ENCODE measurements at regions of chr13 and their contacts with region 1.

Region 1: DNA sequence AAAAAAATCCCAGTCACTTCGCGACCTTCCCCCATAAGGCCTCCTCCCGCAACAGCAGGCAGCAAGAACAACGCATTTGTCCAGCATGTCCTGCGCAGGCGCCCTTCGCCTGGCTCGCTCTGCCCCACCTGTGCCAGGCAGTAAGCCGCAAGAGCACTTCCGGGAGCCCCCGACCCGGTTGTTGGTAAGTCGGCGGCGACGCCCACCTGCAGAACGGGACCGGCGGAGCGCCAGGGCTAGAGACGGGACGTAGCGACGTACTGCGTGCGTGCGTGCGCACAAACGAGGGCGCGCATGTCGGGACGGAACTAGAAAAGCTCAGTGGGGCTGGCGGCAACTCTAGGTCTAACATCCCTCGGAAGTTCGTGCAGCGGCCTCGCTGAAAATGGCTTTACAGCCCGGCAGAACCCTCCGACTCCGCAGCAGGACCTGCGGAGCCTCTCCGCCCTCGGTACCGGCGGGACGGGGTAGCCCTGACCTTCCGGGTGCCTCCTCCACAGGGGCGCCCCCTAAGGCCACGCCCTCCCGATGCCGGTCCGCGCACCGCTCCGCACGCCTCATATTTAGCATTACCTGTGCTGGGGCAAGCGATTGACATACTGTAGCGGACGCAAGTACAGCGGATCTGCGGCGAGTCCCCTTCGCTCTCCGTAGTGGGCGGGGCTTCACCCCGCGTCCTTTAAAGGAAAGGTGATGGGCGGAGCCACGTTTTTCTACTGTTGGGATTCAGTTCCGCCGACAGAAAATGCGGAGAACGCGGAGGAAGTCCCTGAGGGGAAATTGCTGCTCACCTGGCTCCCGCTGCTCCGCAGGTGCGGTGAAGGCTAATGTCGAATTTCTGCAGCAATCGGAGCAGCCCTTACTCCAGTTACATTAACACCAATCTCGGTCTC is at the start of gene MTIF3:
- DNase-seq: peak; percentile 99
- H3K4me3 ChIP-seq: peak within 1 kb of the TSS; percentile 78
- H3K27ac ChIP-seq: peak within 1 kb of the TSS; percentile 95
- H3K4me1 ChIP-seq: peaks cover 57% of the 10 kb centered on the region
- CTCF ChIP-seq: peak; percentile 23; the same call in 1 of the 2 replicates
- total RNA-seq, gene MTIF3: 37.9 and 56.3 TPM in 2 replicates

Region 2: GRCh38 chr13:27171827-27172494 is 278.2 kb before region 1 on chr13:
- CTCF ChIA-PET with region 1: no interaction called
- POLR2A ChIA-PET with region 1: no interaction called
- intact Hi-C with region 1: loop called (anchors 10 kb)
- DNase-seq: peak; percentile 93
- H3K4me3 ChIP-seq: peak overlapping the region; percentile 82
- H3K27ac ChIP-seq: peak overlapping the region; percentile 61
- H3K4me1 ChIP-seq: peaks cover 53% of the 10 kb centered on the region
- CTCF ChIP-seq: peak; percentile 32; the same call in 1 of the 2 replicates

Region 3: GRCh38 chr13:27259831-27260230 is 190.4 kb before region 1 on chr13:
- CTCF ChIA-PET with region 1: no interaction called
- POLR2A ChIA-PET with region 1: no interaction called
- intact Hi-C with region 1: loop called (anchors 2 kb)
- DNase-seq: peak; percentile 41
- H3K4me3 ChIP-seq: no peak overlapping the region
- H3K27ac ChIP-seq: peak overlapping the region; percentile 58
- H3K4me1 ChIP-seq: peaks cover 64% of the 10 kb centered on the region
- CTCF ChIP-seq: no peak

Region 4: DNA sequence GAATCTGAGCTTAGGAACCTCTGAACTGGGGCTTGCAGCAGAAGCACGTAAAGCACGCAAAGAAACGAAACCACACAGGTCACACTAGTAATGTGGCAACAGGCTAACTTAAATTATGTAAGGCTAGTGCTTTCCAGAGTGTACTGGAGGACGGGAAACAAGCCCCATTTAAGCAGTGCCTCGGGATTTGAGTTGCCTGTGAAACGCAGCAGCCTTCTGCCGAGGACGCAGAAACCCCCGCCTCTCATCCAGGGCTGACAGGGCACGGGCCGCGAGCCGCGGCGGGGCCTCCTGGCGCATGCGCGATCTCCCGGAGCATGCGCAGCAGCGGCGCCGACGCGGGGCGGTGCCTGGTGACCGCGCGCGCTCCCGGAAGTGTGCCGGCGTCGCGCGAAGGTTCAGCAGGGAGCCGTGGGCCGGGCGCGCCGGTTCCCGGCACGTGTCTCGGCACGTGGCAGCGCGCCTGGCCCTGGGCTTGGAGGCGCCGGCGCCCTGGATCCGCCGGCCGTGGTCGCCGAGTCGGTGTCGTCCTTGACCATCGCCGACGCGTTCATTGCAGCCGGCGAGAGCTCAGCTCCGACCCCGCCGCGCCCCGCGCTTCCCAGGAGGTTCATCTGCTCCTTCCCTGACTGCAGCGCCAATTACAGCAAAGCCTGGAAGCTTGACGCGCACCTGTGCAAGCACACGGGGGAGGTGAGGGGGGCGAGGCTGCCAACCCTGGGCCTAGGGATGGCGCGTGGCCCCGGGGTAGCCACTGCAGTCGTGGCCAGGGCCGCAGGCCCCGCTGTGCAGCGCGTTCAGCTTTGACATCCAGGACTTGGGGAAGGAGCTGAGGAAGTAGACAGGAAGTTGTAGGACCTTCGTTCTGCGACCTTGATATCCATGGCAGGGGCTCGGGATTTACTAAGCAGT is 25.7 kb before region 1 on chr13 and contains the start of gene GTF3A:
- CTCF ChIA-PET with region 1: interaction called, 6 read pairs
- POLR2A ChIA-PET with region 1: interaction called, 38 read pairs
- intact Hi-C with region 1: loop called (anchors 1 kb)
- DNase-seq: peak; percentile 91
- H3K4me3 ChIP-seq: peak within 1 kb of the TSS; percentile 94
- H3K27ac ChIP-seq: peak within 1 kb of the TSS; percentile 73
- H3K4me1 ChIP-seq: peaks cover 25% of the 10 kb centered on the region
- CTCF ChIP-seq: no peak
- total RNA-seq, gene GTF3A: 220 and 251 TPM in 2 replicates

Region 5: DNA sequence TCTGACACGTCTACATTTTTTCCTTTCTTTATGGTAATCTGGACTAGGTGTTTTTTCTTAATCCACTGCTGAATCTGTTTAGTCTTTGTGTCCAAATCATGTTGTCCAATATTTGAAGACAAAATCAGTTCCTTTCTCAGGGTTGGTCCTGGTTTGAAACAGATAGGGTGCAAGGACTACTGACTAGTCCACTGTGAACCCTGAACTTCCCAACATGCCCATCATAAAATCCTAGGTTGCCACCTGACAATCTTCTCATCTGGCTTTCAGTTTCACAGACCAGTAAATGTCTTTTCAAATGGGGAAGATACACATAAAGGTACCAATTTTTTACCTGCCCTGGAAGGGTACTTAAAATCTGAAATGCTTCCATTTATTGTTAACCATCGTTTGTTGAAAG is 13.1 kb before region 1 on chr13:
- CTCF ChIA-PET with region 1: no interaction called
- POLR2A ChIA-PET with region 1: interaction called, 18 read pairs
- intact Hi-C with region 1: no loop called
- DNase-seq: no peak
- H3K4me3 ChIP-seq: no peak overlapping the region
- H3K27ac ChIP-seq: no peak overlapping the region
- H3K4me1 ChIP-seq: peaks cover 4% of the 10 kb centered on the region
- CTCF ChIP-seq: no peak

Region 6: DNA sequence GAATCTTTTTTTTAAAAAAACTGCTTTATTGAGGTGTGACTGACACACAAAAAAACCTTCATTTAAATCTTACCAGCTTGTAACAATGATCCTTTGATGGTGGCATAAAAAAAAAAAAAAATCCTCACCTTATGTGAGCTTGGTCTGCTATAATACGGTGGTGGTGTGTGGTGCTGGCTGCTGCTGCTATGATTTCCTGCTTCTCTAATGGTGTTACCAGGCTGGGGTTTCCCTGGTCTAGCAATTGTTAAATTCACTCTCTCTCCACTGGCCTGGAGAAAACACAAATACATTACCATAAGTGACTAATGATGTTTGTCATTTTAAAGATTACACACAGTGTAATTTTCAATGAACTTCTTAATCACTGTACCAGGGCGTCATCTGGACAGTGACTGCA is 109.5 kb after region 1 on chr13:
- CTCF ChIA-PET with region 1: no interaction called
- POLR2A ChIA-PET with region 1: no interaction called
- intact Hi-C with region 1: no loop called
- DNase-seq: no peak
- H3K4me3 ChIP-seq: no peak overlapping the region
- H3K27ac ChIP-seq: no peak overlapping the region
- H3K4me1 ChIP-seq: no peaks in the 10 kb centered on the region
- CTCF ChIP-seq: no peak

Region 7: GRCh38 chr13:27620377-27621115 is 170.4 kb after region 1 on chr13 and contains the start of gene LNX2:
- CTCF ChIA-PET with region 1: no interaction called
- POLR2A ChIA-PET with region 1: interaction called, 4 read pairs
- intact Hi-C with region 1: loop called (anchors 2 kb)
- DNase-seq: peak; percentile 97
- H3K4me3 ChIP-seq: peak within 1 kb of the TSS; percentile 88
- H3K27ac ChIP-seq: peak within 1 kb of the TSS; percentile 83
- H3K4me1 ChIP-seq: peaks cover 36% of the 10 kb centered on the region
- CTCF ChIP-seq: no peak
- total RNA-seq, gene LNX2: 5.9 and 6.8 TPM in 2 replicates

Measured in OCI-LY7 (cell line).